Testis (tissue), 5 donors: ENCODE measurements at regions of chr19 and their contacts with region 1.

Region 1: GRCh38 chr19:5048091-5048726 is 79.3 kb downstream of the KDM4B start:
- DNase-seq: peak; percentile 86
- H3K4me3 ChIP-seq: no peak overlapping the region
- H3K27ac ChIP-seq: no peak overlapping the region
- H3K4me1 ChIP-seq: peaks cover 17% of the 10 kb centered on the region
- H3K27me3 ChIP-seq: no peaks in the 10 kb centered on the region
- CTCF ChIP-seq: peak; percentile 96 to 99 (median 98)
- POLR2A ChIP-seq: no peak

Region 2: DNA sequence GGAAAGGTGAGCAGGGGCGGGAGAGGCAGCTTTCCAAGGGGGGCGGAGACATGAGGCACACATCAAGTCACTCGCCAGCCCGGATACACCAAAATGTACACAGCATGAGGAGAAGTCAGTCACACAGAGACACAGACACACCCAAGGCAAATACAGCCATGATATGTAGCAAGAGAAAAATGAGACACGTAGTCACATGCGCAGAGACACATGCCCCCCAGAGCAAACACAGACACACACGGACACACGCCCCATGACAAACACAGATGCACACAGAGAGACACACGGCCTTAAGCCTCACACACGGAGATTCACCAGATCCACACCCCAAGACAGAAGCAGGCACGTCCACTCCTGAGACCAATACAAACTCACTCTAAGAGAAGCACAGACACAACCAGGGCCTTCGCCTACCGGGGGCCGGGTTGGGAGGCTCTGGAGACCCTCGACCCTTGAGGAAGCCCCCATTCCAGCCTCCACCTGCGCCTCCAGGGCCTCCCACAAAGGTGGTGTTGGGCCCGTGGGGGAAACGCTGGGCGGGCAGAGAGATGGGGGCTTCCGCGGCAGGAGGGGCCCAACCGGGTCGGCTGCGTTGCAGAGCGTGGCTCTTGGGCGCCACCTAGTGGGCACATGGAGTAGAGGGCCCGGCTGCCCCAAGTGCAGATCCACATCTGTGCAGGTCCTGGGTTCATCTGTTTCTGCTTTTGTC is 529.7 kb after region 1 on chr19:
- intact Hi-C with region 1: loop called (anchors 10 kb)
- DNase-seq: peak; percentile 82
- H3K4me3 ChIP-seq: peak overlapping the region in 1 of 2 donors; percentile 26
- H3K27ac ChIP-seq: no peak overlapping the region
- H3K4me1 ChIP-seq: peaks cover 5% of the 10 kb centered on the region
- H3K27me3 ChIP-seq: no peaks in the 10 kb centered on the region
- CTCF ChIP-seq: peak; percentile 75 to 98 (median 95)
- POLR2A ChIP-seq: no peak